Transverse colon (tissue), 4 donors: ENCODE measurements at regions of chr1 and their contacts with region 1.

Region 1: GRCh38 chr1:116498789-116499628 is 71.8 kb downstream of the CD58 start:
- DNase-seq: peak; percentile 64
- H3K4me3 ChIP-seq: no peak overlapping the region
- H3K27ac ChIP-seq: no peak overlapping the region
- H3K4me1 ChIP-seq: peaks cover 0 to 42% (median 2%) of the 10 kb centered on the region in 4 donors
- H3K27me3 ChIP-seq: no peaks in the 10 kb centered on the region
- CTCF ChIP-seq: peak; percentile 69 to 93 (median 78)
- EP300 ChIP-seq: no peak
- POLR2A ChIP-seq: no peak

Region 2: DNA sequence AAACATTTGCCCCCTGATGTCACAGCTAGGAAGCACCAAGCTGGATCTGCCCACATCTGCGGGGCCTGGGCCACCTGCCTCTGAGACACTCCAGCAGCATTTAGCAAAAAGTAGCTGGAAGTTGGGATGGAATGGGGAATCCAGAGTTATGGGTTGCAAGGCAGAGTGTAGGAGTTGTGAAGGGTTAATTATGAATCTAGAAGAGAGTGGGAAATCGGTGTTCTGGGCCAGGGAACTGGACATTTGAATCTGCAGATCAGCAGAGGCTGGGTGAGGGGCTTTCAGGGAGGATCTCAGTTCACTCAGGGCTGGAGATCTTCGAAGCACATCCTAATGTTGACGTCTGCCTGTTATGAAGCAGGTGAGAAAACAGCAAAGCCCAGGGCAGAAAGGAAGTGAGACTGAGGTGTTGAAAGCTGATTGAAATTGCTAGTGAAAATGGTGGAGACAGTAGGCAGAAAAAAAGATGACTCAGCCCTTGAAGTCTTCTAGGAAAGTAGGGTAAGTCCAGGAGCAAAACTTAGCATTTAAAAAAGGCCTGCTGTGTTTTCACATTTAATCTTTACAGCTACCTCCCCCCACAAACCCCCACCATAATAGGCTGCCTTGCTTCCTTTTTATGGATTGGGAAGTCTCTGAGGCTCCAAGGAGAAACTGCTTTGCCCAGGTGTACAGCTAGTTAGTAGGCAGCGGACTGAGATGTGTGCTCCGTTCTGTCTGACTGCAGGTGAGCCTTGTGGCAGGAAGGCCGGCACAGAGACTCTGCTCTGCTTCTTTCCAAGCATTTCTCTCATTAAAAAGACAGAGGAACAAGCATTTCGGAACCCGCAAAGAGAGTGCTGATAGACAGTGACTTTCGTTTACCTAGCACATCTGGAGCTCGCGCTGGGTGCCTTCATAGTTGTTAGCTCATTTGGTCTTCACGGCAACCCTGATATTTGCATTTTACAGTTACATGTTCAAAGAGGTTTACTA is 850.0 kb before region 1 on chr1:
- in situ Hi-C with region 1: no loop called
- intact Hi-C with region 1: no loop called
- DNase-seq: no peak
- H3K4me3 ChIP-seq: no peak overlapping the region
- H3K27ac ChIP-seq: peak overlapping the region in 3 of 4 donors; percentile 26 to 62 (median 57)
- H3K4me1 ChIP-seq: peaks cover 27 to 71% (median 37%) of the 10 kb centered on the region in 4 donors
- H3K27me3 ChIP-seq: no peaks in the 10 kb centered on the region
- CTCF ChIP-seq: no peak
- EP300 ChIP-seq: no peak
- POLR2A ChIP-seq: no peak

Region 3: GRCh38 chr1:116133696-116134650 is 365.0 kb before region 1 on chr1:
- in situ Hi-C with region 1: loop called in 3 of 4 experiments (anchors 10 to 25 kb)
- intact Hi-C with region 1: no loop called
- DNase-seq: no peak
- H3K4me3 ChIP-seq: no peak overlapping the region
- H3K27ac ChIP-seq: no peak overlapping the region
- H3K4me1 ChIP-seq: peaks cover 0 to 2% (median 0%) of the 10 kb centered on the region in 4 donors
- H3K27me3 ChIP-seq: no peaks in the 10 kb centered on the region
- CTCF ChIP-seq: no peak
- EP300 ChIP-seq: no peak
- POLR2A ChIP-seq: no peak

Region 4: DNA sequence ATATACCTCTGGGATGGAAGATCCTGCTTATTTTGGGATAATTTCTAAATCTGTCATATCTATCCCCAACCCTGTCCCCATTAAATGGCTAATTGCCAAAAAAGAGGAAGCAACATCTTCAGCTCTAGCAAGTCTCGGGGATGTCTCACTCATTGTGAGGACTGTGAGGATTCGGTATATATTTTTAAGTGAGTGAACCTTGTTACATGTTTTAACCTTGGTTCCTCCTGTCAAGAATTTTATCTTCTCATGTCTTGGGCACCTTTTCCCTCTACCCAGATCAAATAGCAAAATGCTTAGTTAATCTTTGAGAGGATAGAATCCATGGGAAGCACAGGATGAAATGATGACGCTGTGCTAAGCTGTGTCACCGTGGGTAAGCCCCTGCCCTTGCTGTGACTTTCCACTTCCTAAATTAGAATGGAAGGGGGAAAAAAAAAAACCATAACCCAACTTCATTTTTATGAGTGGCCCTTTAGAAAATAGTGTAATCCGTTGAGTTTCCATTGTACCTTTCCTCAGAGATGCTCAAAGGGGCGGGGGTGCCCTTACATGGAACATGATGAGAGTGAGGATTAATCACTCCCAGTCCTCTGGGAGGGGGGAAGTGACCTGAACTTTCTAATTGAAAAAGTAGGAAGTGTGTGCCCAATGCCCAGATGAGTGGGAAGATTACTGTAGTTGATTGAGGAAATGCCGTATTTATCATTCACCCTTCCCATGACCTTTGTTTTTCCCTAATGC is 118.3 kb before region 1 on chr1:
- in situ Hi-C with region 1: loop called in 1 of 4 experiments (anchors 10 kb)
- intact Hi-C with region 1: no loop called
- DNase-seq: no peak
- H3K4me3 ChIP-seq: no peak overlapping the region
- H3K27ac ChIP-seq: peak overlapping the region in 3 of 4 donors; percentile 15 to 99 (median 23)
- H3K4me1 ChIP-seq: peaks cover 31 to 79% (median 59%) of the 10 kb centered on the region in 4 donors
- H3K27me3 ChIP-seq: no peaks in the 10 kb centered on the region
- CTCF ChIP-seq: no peak
- EP300 ChIP-seq: no peak
- POLR2A ChIP-seq: no peak